HepG2 (cell line): ENCODE measurements at regions of chr11 and their contacts with region 1.

Region 1: GRCh38 chr11:126115816-126116331 is 53.2 kb upstream of the CDON start:
- DNase-seq: peak; percentile 93
- ATAC-seq: peak; percentile 91
- H3K4me3 ChIP-seq: peak overlapping the region; percentile 22 to 73 (median 38); a peak in 5 of 6 replicates
- H3K27ac ChIP-seq: peak overlapping the region; percentile 65
- H3K4me1 ChIP-seq: peaks cover 64% of the 10 kb centered on the region
- H3K27me3 ChIP-seq: peaks cover 5 to 9% of the 10 kb centered on the region in 2 experiments; a peak in 2 of 5 replicates
- CTCF ChIP-seq: peak; percentile 77
- EP300 ChIP-seq: peak; percentile 70 to 77; a peak in 3 of 4 replicates
- POLR2A ChIP-seq: peak; percentile 31 to 37; a peak in 2 of 4 replicates
- RAD21 ChIP-seq: peak; percentile 65

Region 2: DNA sequence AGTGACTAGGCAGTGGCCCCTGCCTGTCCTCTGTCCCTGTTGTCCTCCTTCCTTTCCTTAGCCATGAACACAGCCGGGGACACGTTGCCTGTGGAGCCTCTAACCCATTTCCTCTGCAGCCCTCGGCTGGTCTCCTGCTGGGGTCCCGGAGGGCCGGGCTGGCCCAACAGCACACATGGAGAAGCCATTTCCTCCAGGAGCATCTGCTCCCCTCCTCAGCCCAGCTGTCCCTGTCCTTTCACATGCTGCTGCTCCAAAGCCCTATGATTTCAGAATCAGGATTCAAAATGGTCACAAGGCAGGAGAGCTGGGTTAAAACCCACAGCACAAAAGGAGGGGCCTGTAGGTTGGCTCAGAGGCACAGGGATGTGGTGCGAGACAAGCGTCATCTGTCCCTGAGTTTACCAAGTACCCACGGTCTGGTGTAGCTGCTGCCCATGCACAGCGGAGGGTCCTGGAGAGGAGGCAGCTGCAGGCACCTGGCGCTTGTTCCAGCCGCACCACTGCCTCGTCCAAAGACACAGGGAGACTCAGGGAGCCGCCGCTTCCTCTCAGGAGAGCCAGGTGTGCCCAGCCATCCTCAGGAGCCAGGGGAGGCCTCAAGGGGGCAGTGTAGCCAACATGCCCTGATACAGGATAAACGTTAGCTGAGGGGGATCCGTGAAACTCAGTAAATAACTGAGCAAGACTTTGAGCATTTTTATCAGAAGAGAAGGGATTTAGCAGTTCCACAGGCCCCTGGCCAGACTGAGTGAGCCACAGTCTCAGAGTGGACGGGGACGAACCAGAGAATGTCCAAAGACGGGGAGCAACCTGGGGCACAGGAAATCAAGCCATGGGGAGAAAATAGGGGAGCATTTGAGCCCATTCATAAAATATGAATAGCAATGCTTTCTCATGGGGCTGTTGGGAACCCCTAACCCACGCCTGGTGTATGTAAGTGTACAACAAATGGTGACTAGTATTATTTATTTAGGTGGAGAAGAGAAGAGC is 174.0 kb before region 1 on chr11:
- CTCF ChIA-PET with region 1: no interaction called
- POLR2A ChIA-PET with region 1: no interaction called
- in situ Hi-C with region 1: no loop called
- intact Hi-C with region 1: loop called (anchors 1 kb)
- DNase-seq: peak; percentile 60
- ATAC-seq: peak; percentile 93
- H3K4me3 ChIP-seq: peak overlapping the region; percentile 36 to 64 (median 37)
- H3K27ac ChIP-seq: no peak overlapping the region
- H3K4me1 ChIP-seq: peaks cover 43% of the 10 kb centered on the region
- H3K27me3 ChIP-seq: peaks cover 0 to 3% of the 10 kb centered on the region in 2 experiments; a peak in 1 of 5 replicates
- CTCF ChIP-seq: peak; percentile 93
- EP300 ChIP-seq: no peak
- POLR2A ChIP-seq: no peak
- RAD21 ChIP-seq: peak; percentile 39; the same call in 1 of the 2 replicates

Region 3: GRCh38 chr11:126083829-126084607 is 31.9 kb before region 1 on chr11:
- CTCF ChIA-PET with region 1: no interaction called
- POLR2A ChIA-PET with region 1: interaction called, 6 read pairs
- in situ Hi-C with region 1: no loop called
- intact Hi-C with region 1: loop called (anchors 2 kb)
- DNase-seq: no peak
- ATAC-seq: peak; percentile 48
- H3K4me3 ChIP-seq: peak overlapping the region; percentile 11 to 57 (median 41); a peak in 4 of 6 replicates
- H3K27ac ChIP-seq: peak overlapping the region; percentile 29
- H3K4me1 ChIP-seq: peaks cover 87% of the 10 kb centered on the region
- H3K27me3 ChIP-seq: no peaks in the 10 kb centered on the region; a peak in 1 of 5 replicates
- CTCF ChIP-seq: no peak
- EP300 ChIP-seq: no peak
- POLR2A ChIP-seq: no peak
- RAD21 ChIP-seq: no peak

Region 4: GRCh38 chr11:126132319-126132718 is 16.4 kb after region 1 on chr11:
- CTCF ChIA-PET with region 1: no interaction called
- POLR2A ChIA-PET with region 1: interaction called, 10 read pairs
- in situ Hi-C with region 1: no loop called
- intact Hi-C with region 1: no loop called
- DNase-seq: no peak
- ATAC-seq: peak; percentile 29; the same call in 2 of the 3 replicates
- H3K4me3 ChIP-seq: no peak overlapping the region
- H3K27ac ChIP-seq: no peak overlapping the region
- H3K4me1 ChIP-seq: peaks cover 68% of the 10 kb centered on the region
- H3K27me3 ChIP-seq: no peaks in the 10 kb centered on the region
- CTCF ChIP-seq: no peak
- EP300 ChIP-seq: no peak
- POLR2A ChIP-seq: no peak
- RAD21 ChIP-seq: no peak

Region 5: GRCh38 chr11:126146433-126147192 is 30.7 kb after region 1 on chr11:
- CTCF ChIA-PET with region 1: no interaction called
- POLR2A ChIA-PET with region 1: interaction called, 40 read pairs
- in situ Hi-C with region 1: no loop called
- intact Hi-C with region 1: no loop called
- DNase-seq: peak; percentile 84
- ATAC-seq: peak; percentile 65
- H3K4me3 ChIP-seq: peak overlapping the region; percentile 46 to 83 (median 55)
- H3K27ac ChIP-seq: peak overlapping the region; percentile 88
- H3K4me1 ChIP-seq: peaks cover 78% of the 10 kb centered on the region
- H3K27me3 ChIP-seq: no peaks in the 10 kb centered on the region
- CTCF ChIP-seq: no peak
- EP300 ChIP-seq: no peak
- POLR2A ChIP-seq: peak in 1 of 2 experiments; percentile 37; a peak in 1 of 4 replicates
- RAD21 ChIP-seq: no peak